Heart right ventricle (tissue), 16 donors: ENCODE measurements at regions of chr6 and their contacts with region 1.

Region 1: DNA sequence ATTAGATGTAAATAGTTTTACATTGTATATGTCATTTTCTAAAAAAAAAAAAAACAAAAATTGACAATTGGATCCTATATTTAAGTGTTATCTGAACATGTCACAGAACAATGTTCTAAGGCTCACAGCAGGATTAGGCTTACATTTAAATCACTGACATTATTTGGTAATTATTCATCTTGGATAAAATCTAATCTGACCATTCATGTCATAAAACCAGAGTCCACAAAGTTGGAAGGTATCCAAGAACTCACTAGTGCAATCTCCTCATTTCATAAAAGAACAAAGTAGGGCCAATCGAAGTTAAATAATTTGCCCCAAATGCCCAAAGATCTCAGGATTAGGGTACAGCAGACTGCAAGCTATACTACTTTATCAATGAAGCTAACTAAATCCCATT is 73.0 kb downstream of the PDSS2 start:
- DNase-seq: no peak
- ATAC-seq: no peak
- H3K4me3 ChIP-seq: no peak overlapping the region
- H3K27ac ChIP-seq: no peak overlapping the region
- H3K4me1 ChIP-seq: no peaks in the 10 kb centered on the region
- H3K27me3 ChIP-seq: no peaks in the 10 kb centered on the region
- CTCF ChIP-seq: no peak

Region 2: DNA sequence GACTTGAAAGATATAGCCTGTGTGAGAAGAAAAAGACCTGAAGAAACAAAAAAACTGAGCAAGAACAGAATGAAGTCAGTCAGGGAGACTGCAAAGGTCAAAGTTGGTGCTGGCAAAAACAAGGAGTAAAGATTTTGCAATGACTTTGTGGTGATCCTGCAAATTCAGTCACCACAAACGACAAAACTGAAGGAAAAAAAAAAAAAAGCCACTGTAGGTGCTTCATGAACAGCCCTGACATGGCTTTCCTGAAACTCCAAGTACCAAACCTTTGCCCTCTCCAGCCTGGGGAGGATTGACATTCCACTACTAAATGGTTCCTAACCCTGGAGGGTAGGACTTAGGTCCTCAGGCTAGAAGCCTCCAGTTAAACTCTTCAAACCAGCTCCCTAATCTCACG is 156.3 kb before region 1 on chr6:
- intact Hi-C with region 1: loop called in 1 of 10 experiments (anchors 5 kb)
- DNase-seq: no peak
- ATAC-seq: no peak
- H3K4me3 ChIP-seq: no peak overlapping the region
- H3K27ac ChIP-seq: no peak overlapping the region
- H3K4me1 ChIP-seq: peaks cover 0 to 4% (median 1%) of the 10 kb centered on the region in 9 donors
- H3K27me3 ChIP-seq: no peaks in the 10 kb centered on the region
- CTCF ChIP-seq: no peak